ENCODE measurements at regions of chr1 and their contacts with region 1.

Region 1: GRCh38 chr1:211830330-211831142 is at the start of gene LPGAT1:
- DNase-seq: no peak
- H3K4me3 ChIP-seq: peak within 1 kb of the TSS; percentile 68
- CTCF ChIP-seq: peak; percentile 73

Region 2: DNA sequence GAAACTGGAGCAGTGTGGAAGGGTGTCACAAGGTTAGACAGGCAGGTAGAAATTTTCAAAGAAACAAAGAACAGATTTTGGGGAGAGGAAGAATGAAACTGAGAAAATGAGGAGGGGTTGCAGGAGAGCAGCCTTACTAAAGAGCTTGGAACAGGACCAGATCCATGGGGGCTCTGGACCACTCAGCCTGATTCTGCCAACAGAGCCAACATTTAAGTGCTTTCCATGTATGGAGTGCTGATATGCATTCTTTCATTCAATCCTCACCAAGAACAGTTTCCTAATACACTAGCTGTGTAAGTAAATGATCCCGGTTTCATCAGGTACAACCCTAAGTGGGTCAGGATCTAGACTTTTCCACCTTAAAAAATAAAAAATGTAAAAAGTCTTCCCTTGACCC is 16.2 kb before region 1 on chr1:
- CTCF ChIA-PET with region 1: interaction called, 11 read pairs
- POLR2A ChIA-PET with region 1: interaction called, 4 read pairs
- DNase-seq: no peak
- H3K4me3 ChIP-seq: no peak overlapping the region
- CTCF ChIP-seq: no peak

Region 3: DNA sequence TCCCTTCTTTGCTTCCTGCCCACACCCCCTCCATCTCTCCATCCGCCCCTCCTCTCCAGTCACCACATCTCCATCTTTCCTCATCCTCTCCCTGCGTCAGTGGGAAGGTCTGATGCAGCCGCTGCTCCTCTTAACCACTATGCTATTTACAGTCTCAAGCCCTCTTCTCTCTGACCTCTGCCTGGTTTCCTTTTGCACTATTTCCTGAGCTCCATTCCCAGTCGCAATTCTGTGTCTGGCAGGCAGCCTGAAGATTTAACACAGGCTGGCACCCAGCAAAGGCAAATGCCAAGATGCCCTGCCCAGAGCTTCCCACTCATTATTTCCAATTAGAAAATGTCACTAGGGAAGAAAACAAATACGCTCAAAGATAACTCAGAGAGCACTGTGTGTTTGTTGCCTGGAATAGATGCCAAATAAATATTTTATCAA is 89.6 kb after region 1 on chr1:
- CTCF ChIA-PET with region 1: no interaction called
- POLR2A ChIA-PET with region 1: no interaction called
- DNase-seq: peak; percentile 16
- H3K4me3 ChIP-seq: no peak overlapping the region
- CTCF ChIP-seq: no peak